Activated CD8-positive, alpha-beta T cell treated with anti-CD3 and anti-CD28 coated beads, Interleukin-2, amount 10 ng/mL, durations not matched to agents 7 days and 5 days (primary cell): ENCODE measurements at regions of chr12 and their contacts with region 1.

Region 1: DNA sequence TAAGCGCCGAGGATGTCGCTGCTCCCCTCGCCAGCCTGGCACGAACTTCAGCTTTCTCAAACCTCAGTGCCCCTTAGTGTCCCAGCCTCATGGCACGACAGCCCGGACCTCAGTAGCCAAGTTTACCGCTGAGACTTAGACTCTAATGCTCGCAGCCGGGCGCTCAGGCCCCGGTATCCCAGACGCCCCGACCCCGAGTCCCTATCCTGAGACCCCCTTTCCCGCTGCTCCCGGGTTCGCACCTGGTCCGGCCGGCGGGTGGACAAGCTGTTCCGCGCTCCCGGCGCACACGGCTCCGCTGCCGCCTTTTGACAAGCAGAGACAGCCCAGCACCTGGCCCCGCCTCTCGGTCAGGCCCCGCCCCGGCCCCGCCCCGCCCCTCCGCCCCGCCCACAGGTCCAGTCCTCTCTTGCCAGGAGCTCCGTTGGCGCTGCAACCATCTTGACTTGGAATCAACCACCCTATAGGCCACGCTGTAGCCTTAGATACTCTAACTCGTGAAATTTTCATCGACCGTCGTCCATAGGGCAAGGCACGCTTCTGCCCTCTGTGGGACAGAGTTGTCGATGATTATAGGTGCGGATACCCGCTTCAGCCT is at the start of gene VDR:
- DNase-seq: peak; percentile 75
- ATAC-seq: peak; percentile 77
- H3K4me3 Mint-ChIP-seq: peak within 1 kb of the TSS; percentile 81
- H3K27ac Mint-ChIP-seq: peak within 1 kb of the TSS; percentile 69
- H3K4me1 Mint-ChIP-seq: peaks cover 52% of the 10 kb centered on the region
- H3K27me3 Mint-ChIP-seq: peaks cover 30% of the 10 kb centered on the region
- total RNA-seq, gene VDR: 13.2 to 14.5 TPM

Region 2: GRCh38 chr12:47949441-47950308 is 44.9 kb after region 1 on chr12:
- CTCF ChIA-PET with region 1: interaction called, 11 read pairs
- POLR2A ChIA-PET with region 1: no interaction called
- DNase-seq: peak; percentile 50
- ATAC-seq: peak; percentile 75
- H3K4me3 Mint-ChIP-seq: no peak overlapping the region
- H3K27ac Mint-ChIP-seq: no peak overlapping the region
- H3K4me1 Mint-ChIP-seq: peaks cover 12% of the 10 kb centered on the region
- H3K27me3 Mint-ChIP-seq: peaks cover 18% of the 10 kb centered on the region